ENCODE measurements at regions of chr3 and their contacts with region 1.

Region 1: DNA sequence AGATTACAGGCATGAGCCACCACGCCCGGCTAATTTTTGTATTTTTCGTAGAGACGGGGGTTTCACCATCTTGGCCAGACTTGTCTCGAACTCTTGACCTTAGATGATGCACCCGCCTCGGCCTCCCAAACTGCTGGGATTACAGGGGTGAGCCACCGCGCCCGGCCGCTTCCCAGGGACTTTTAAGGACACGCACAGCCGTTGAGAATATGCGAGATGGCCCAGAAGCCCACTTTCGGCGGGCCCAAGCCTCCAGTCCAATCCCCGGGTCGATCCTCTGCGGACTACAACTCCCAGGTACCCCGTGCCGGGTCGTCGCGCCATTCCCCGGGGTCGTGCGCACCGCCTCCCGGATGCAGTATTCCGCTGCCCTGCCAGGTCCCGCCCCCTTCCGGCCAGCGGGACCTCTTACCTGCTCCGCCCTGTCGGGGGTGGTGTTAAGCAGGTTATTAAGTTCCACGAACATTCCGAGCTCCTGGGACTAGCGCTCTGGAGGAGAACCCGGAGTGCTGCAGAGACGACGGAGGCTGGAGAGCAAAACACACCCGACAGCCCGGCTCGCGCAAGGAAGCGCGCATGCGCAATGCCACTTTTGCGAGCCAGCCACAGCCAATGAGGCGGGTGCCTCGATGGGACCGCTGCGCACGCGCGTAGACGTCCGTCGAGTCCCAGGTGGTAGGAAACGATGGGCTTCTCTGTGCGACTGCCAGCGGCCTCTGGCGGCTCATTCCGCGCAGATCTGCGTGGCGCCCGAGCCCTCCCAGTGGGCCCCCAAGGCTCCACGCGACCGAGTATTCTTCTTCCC is at the start of gene ELP6:
- DNase-seq: peak; percentile 98
- H3K4me3 Mint-ChIP-seq: peak within 1 kb of the TSS; percentile 97
- H3K27ac Mint-ChIP-seq: peak within 1 kb of the TSS; percentile 98
- H3K4me1 Mint-ChIP-seq: peaks cover 20% of the 10 kb centered on the region
- H3K27me3 Mint-ChIP-seq: no peaks in the 10 kb centered on the region
- total RNA-seq, gene ELP6: 32.7 to 32.8 TPM

Region 2: DNA sequence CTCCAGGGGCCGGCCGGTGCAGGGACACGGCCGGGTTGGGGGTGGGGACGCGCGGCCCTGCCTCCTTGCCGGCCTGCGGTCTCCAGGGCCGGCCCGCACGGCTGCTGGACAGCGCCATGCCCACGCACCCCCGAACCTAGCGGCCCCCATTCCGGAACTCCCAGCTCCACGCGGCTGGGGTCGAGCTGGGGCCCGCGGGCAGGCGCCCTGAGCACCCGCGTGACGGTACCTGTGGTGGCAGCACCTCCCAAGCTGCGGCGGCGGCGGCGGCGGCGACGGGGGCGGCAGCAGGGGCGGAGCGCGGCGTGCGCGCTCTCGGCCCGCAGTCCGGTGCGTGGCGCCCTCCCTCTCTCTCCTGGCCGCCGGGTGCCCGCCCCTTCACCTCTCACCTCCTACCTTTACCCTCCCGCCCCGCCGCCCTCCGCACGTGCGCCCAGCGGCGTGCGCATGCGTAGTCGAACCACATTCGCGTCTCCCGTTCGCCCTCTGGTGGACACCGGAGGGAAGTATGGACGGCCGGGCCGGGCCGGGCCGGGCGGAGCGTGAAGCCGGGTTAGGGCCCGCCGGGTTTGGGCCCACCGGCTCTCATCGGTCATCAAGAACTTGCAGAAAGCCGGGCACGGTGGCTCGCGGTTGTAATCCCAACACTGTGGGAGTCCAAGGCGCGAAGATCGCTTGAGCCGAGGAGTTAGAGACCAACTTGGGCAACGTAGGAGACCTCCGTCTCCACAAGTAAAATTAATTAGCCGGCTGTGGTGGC is 37.6 kb before region 1 on chr3 and contains the start of gene SCAP:
- CTCF ChIA-PET with region 1: no interaction called
- POLR2A ChIA-PET with region 1: no interaction called
- intact Hi-C with region 1: loop called (anchors 1 kb)
- DNase-seq: peak; percentile 97
- H3K4me3 Mint-ChIP-seq: peak within 1 kb of the TSS; percentile 86
- H3K27ac Mint-ChIP-seq: peak within 1 kb of the TSS; percentile 81
- H3K4me1 Mint-ChIP-seq: peaks cover 33% of the 10 kb centered on the region
- H3K27me3 Mint-ChIP-seq: no peaks in the 10 kb centered on the region
- total RNA-seq, gene SCAP: 44.5 to 44.6 TPM

Region 3: DNA sequence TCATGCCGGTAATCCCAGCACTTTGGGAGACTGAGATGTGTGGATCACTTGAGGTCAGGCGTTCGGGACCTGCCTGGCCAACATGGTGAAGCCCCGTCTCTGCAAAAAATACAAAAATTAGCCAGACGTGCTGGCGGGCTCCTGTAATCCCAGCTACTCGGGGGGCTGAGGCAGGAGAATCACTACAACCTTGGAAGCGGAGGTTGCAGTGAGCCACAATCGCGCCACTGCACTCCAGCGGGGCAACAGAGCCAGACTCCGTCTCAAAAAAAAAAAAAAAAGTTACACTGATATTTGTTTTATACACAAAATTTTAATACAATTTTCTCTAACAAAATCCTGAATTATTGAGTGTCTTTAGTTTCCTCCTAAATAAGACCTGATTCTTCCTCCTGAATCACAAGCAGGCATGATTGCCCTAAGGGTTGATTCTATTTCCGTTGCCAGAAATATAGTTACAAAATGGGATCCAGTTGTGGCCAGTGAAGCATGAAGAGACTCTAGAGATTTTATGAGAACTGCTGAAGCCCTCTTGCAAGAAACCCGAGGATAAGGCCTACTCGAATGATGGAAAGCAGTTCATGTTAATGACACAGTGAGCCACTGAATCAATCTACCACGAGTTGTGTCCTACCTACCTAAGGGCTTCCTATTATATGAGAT is 278.0 kb after region 1 on chr3:
- CTCF ChIA-PET with region 1: interaction called, 3 read pairs
- POLR2A ChIA-PET with region 1: no interaction called
- intact Hi-C with region 1: loop called (anchors 2 kb)
- DNase-seq: no peak
- H3K4me3 Mint-ChIP-seq: no peak overlapping the region
- H3K27ac Mint-ChIP-seq: no peak overlapping the region
- H3K4me1 Mint-ChIP-seq: no peaks in the 10 kb centered on the region
- H3K27me3 Mint-ChIP-seq: no peaks in the 10 kb centered on the region

Region 4: GRCh38 chr3:47802734-47803477 is 289.6 kb after region 1 on chr3 and contains the start of gene DHX30:
- CTCF ChIA-PET with region 1: no interaction called
- POLR2A ChIA-PET with region 1: no interaction called
- intact Hi-C with region 1: loop called (anchors 5 kb)
- DNase-seq: peak; percentile 90
- H3K4me3 Mint-ChIP-seq: peak within 1 kb of the TSS; percentile 92
- H3K27ac Mint-ChIP-seq: peak within 1 kb of the TSS; percentile 87
- H3K4me1 Mint-ChIP-seq: peaks cover 21% of the 10 kb centered on the region
- H3K27me3 Mint-ChIP-seq: no peaks in the 10 kb centered on the region
- total RNA-seq, gene DHX30: 76.7 to 77.5 TPM

Measured in activated CD4-positive, alpha-beta memory T cell treated with anti-CD3 and anti-CD28 coated beads for 36 hours (primary cell).